AG04450 (cell line): ENCODE measurements at regions of chr9 and their contacts with region 1.

Region 1: GRCh38 chr9:137302176-137302994 is at the start of gene NRARP:
- DNase-seq: no peak
- H3K4me3 ChIP-seq: peak within 1 kb of the TSS; percentile 47
- H3K27ac ChIP-seq: no peak within 1 kb of the TSS
- H3K27me3 ChIP-seq: peaks cover 24% of the 10 kb centered on the region
- CTCF ChIP-seq: peak; percentile 59
- polyA plus RNA-seq, gene NRARP: 0.17 and 0.22 TPM in 2 replicates

Region 2: GRCh38 chr9:137372693-137373610 is 70.6 kb after region 1 on chr9:
- CTCF ChIA-PET with region 1: interaction called, 11 read pairs
- POLR2A ChIA-PET with region 1: no interaction called
- DNase-seq: no peak
- H3K4me3 ChIP-seq: no peak overlapping the region
- H3K27ac ChIP-seq: no peak overlapping the region
- H3K27me3 ChIP-seq: no peaks in the 10 kb centered on the region
- CTCF ChIP-seq: no peak

Region 3: DNA sequence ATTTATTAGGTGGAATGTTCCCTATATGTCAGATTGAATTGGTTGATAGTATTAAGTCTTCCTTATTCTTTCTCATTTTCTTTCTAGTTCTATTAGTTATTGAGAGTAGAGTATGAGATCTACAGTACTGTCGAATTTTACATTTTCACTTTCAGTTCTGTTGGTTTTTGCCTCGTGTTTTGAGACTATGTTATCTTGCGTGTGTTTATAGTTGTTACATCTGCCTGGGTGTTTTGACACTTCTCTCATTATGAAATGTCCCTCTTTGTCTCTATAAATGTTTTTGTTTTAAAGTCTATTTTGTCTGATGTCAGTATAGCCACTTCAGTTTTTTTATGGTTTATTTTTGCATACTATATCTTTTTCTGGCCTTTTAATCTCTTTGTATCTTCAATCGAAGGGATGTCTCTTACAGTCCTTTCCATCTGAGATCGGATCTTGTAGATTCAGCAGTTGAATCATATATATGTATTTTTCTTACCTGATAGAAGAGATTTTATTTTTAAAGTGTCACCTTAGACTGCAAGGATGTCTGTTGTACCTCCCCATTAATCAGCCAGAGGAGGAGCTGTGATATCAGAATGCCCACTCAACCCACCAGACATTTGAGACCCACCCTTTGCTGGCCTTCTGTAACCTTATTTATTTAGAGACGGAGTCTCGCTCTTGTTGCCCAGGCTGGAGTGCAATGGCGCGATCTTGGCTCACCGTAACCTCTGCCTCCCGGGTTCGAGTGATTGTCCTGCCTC is 337.1 kb after region 1 on chr9:
- CTCF ChIA-PET with region 1: no interaction called
- POLR2A ChIA-PET with region 1: no interaction called
- DNase-seq: no peak
- H3K4me3 ChIP-seq: peak overlapping the region; percentile 5
- H3K27ac ChIP-seq: no peak overlapping the region
- H3K27me3 ChIP-seq: no peaks in the 10 kb centered on the region
- CTCF ChIP-seq: no peak